T-cell (primary cell): ENCODE measurements at regions of chr6 and their contacts with region 1.

Region 1: GRCh38 chr6:66522864-66523263 is 815.8 kb upstream of the EYS start:
- DNase-seq: no peak
- ATAC-seq: no peak
- H3K4me3 ChIP-seq: no peak overlapping the region
- H3K4me3 Mint-ChIP-seq: no peak overlapping the region
- H3K27ac ChIP-seq: no peak overlapping the region
- H3K27ac Mint-ChIP-seq: no peak overlapping the region
- H3K4me1 ChIP-seq: no peaks in the 10 kb centered on the region
- H3K4me1 Mint-ChIP-seq: no peaks in the 10 kb centered on the region
- H3K27me3 ChIP-seq: no peaks in the 10 kb centered on the region
- H3K27me3 Mint-ChIP-seq: no peaks in the 10 kb centered on the region

Region 2: GRCh38 chr6:66508433-66508832 is 14.4 kb before region 1 on chr6:
- CTCF ChIA-PET with region 1: interaction called in 1 of 2 experiments, 10 read pairs
- POLR2A ChIA-PET with region 1: no interaction called
- DNase-seq: no peak
- ATAC-seq: no peak
- H3K4me3 ChIP-seq: no peak overlapping the region
- H3K4me3 Mint-ChIP-seq: no peak overlapping the region
- H3K27ac ChIP-seq: no peak overlapping the region
- H3K27ac Mint-ChIP-seq: no peak overlapping the region
- H3K4me1 ChIP-seq: no peaks in the 10 kb centered on the region
- H3K4me1 Mint-ChIP-seq: no peaks in the 10 kb centered on the region
- H3K27me3 ChIP-seq: no peaks in the 10 kb centered on the region
- H3K27me3 Mint-ChIP-seq: no peaks in the 10 kb centered on the region

Region 3: GRCh38 chr6:66605971-66606370 is 83.1 kb after region 1 on chr6:
- CTCF ChIA-PET with region 1: no interaction called
- POLR2A ChIA-PET with region 1: no interaction called
- DNase-seq: no peak
- ATAC-seq: no peak
- H3K4me3 ChIP-seq: no peak overlapping the region
- H3K4me3 Mint-ChIP-seq: no peak overlapping the region
- H3K27ac ChIP-seq: no peak overlapping the region
- H3K27ac Mint-ChIP-seq: no peak overlapping the region
- H3K4me1 ChIP-seq: no peaks in the 10 kb centered on the region
- H3K4me1 Mint-ChIP-seq: no peaks in the 10 kb centered on the region
- H3K27me3 ChIP-seq: no peaks in the 10 kb centered on the region
- H3K27me3 Mint-ChIP-seq: no peaks in the 10 kb centered on the region

Region 4: DNA sequence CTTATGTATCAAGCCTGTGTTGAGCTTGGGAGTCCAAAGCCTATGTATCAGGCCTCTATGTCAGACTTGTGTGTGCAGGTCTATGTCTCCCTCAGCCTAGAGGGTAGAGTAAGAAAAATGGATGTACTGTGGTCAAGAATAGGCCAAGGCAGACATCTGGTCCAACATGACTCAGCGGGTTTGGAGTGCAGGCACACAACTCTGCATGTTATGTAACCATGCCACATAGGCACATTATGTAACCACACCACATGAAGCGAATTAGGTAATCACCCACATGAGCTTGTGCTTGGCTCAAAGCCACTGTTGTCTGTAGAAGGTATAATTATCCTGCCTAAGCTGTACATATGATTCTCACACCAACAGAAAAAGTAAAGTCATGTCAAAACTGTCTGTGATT is 374.7 kb after region 1 on chr6:
- CTCF ChIA-PET with region 1: no interaction called
- POLR2A ChIA-PET with region 1: no interaction called
- DNase-seq: peak in 5 of 35 experiments; percentile 1 to 10 (median 1)
- ATAC-seq: no peak
- H3K4me3 ChIP-seq: no peak overlapping the region
- H3K4me3 Mint-ChIP-seq: no peak overlapping the region
- H3K27ac ChIP-seq: no peak overlapping the region
- H3K27ac Mint-ChIP-seq: no peak overlapping the region
- H3K4me1 ChIP-seq: no peaks in the 10 kb centered on the region
- H3K4me1 Mint-ChIP-seq: no peaks in the 10 kb centered on the region
- H3K27me3 ChIP-seq: no peaks in the 10 kb centered on the region
- H3K27me3 Mint-ChIP-seq: no peaks in the 10 kb centered on the region